OCI-LY7 (cell line): ENCODE measurements at regions of chr2 and their contacts with region 1.

Region 1: GRCh38 chr2:195559431-195559914 is 97.6 kb upstream of the SLC39A10 start:
- DNase-seq: peak; percentile 97
- H3K4me3 ChIP-seq: peak overlapping the region; percentile 38
- H3K27ac ChIP-seq: peak overlapping the region; percentile 95
- H3K4me1 ChIP-seq: peaks cover 68% of the 10 kb centered on the region
- CTCF ChIP-seq: no peak

Region 2: GRCh38 chr2:194104687-194105086 is 1454.8 kb before region 1 on chr2:
- CTCF ChIA-PET with region 1: no interaction called
- POLR2A ChIA-PET with region 1: no interaction called
- intact Hi-C with region 1: loop called (anchors 5 kb)
- DNase-seq: peak; percentile 84
- H3K4me3 ChIP-seq: peak overlapping the region; percentile 35
- H3K27ac ChIP-seq: peak overlapping the region; percentile 90
- H3K4me1 ChIP-seq: peaks cover 42% of the 10 kb centered on the region
- CTCF ChIP-seq: no peak

Region 3: GRCh38 chr2:195498176-195498575 is 61.3 kb before region 1 on chr2:
- CTCF ChIA-PET with region 1: no interaction called
- POLR2A ChIA-PET with region 1: interaction called, 12 read pairs
- intact Hi-C with region 1: loop called (anchors 2 kb)
- DNase-seq: peak; percentile 67
- H3K4me3 ChIP-seq: no peak overlapping the region
- H3K27ac ChIP-seq: no peak overlapping the region
- H3K4me1 ChIP-seq: peaks cover 30% of the 10 kb centered on the region
- CTCF ChIP-seq: peak; percentile 84

Region 4: DNA sequence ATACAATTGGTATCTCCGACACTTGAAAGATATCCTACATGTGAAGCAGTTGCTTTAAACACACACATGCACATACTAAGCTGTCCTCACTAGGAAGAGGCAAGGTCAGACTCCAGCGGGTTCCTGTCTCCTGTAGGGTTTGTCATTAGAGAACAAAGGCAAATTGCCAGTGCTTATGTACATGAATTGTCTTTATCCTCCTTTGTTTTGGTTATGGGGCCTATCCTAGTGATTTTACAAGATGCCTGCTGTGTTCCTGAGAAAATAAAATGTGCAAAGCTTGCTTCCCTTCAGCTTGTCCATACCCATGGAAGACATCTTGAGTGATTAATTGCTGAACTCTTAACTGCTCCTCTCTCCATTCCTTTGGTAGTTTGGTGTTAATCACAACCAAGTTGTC is 10.9 kb after region 1 on chr2:
- CTCF ChIA-PET with region 1: no interaction called
- POLR2A ChIA-PET with region 1: interaction called, 32 read pairs
- intact Hi-C with region 1: no loop called
- DNase-seq: no peak
- H3K4me3 ChIP-seq: no peak overlapping the region
- H3K27ac ChIP-seq: no peak overlapping the region
- H3K4me1 ChIP-seq: peaks cover 13% of the 10 kb centered on the region
- CTCF ChIP-seq: no peak

Region 5: GRCh38 chr2:195649629-195650190 is 90.2 kb after region 1 on chr2:
- CTCF ChIA-PET with region 1: no interaction called
- POLR2A ChIA-PET with region 1: interaction called, 20 read pairs
- intact Hi-C with region 1: no loop called
- DNase-seq: peak; percentile 50
- H3K4me3 ChIP-seq: peak overlapping the region; percentile 51
- H3K27ac ChIP-seq: peak overlapping the region; percentile 83
- H3K4me1 ChIP-seq: peaks cover 51% of the 10 kb centered on the region
- CTCF ChIP-seq: no peak

Region 6: GRCh38 chr2:196066291-196067087 is 507.0 kb after region 1 on chr2:
- CTCF ChIA-PET with region 1: no interaction called
- POLR2A ChIA-PET with region 1: no interaction called
- intact Hi-C with region 1: no loop called
- DNase-seq: peak; percentile 40
- H3K4me3 ChIP-seq: no peak overlapping the region
- H3K27ac ChIP-seq: no peak overlapping the region
- H3K4me1 ChIP-seq: peaks cover 5% of the 10 kb centered on the region
- CTCF ChIP-seq: peak; percentile 91